ENCODE measurements at regions of chr5 and their contacts with region 1.

Region 1: GRCh38 chr5:89313804-89314588 is 431.0 kb upstream of the MEF2C start:
- DNase-seq: no peak
- ATAC-seq: peak; percentile 94
- H3K4me3 Mint-ChIP-seq: peak overlapping the region; percentile 66
- H3K27ac Mint-ChIP-seq: peak overlapping the region; percentile 96
- H3K4me1 Mint-ChIP-seq: peaks cover 48% of the 10 kb centered on the region
- H3K27me3 Mint-ChIP-seq: no peaks in the 10 kb centered on the region
- CTCF ChIP-seq: no peak

Region 2: GRCh38 chr5:88819301-88819999 is 494.5 kb before region 1 on chr5:
- CTCF ChIA-PET with region 1: no interaction called
- POLR2A ChIA-PET with region 1: interaction called, 14 read pairs
- intact Hi-C with region 1: no loop called
- DNase-seq: no peak
- ATAC-seq: peak; percentile 67
- H3K4me3 Mint-ChIP-seq: peak overlapping the region; percentile 80
- H3K27ac Mint-ChIP-seq: peak overlapping the region; percentile 91
- H3K4me1 Mint-ChIP-seq: peaks cover 87% of the 10 kb centered on the region
- H3K27me3 Mint-ChIP-seq: no peaks in the 10 kb centered on the region
- CTCF ChIP-seq: no peak

Region 3: GRCh38 chr5:89120719-89121118 is 193.3 kb before region 1 on chr5:
- CTCF ChIA-PET with region 1: no interaction called
- POLR2A ChIA-PET with region 1: no interaction called
- intact Hi-C with region 1: no loop called
- DNase-seq: no peak
- ATAC-seq: no peak
- H3K4me3 Mint-ChIP-seq: no peak overlapping the region
- H3K27ac Mint-ChIP-seq: no peak overlapping the region
- H3K4me1 Mint-ChIP-seq: peaks cover 8% of the 10 kb centered on the region
- H3K27me3 Mint-ChIP-seq: no peaks in the 10 kb centered on the region
- CTCF ChIP-seq: no peak

Region 4: DNA sequence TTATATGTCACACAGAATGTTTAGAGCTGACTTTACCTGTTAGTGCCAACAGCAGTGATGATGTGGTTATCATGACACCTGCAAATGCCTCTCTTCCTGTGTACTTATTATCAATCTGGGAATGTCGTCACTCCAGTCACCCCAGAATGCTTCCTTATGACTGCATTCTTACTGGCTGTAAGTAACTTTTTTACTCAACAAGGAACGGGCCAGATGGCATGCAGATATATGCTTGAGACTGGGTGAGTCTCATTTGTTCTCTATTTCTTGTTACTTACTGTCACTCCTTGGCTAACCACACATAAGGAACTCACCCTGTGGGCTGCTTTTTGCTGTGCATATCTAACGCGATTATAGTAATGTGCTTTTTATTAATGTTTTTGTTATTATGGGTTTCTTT is 45.5 kb before region 1 on chr5:
- CTCF ChIA-PET with region 1: interaction called, 9 read pairs
- POLR2A ChIA-PET with region 1: interaction called, 38 read pairs
- intact Hi-C with region 1: loop called (anchors 1 kb)
- DNase-seq: no peak
- ATAC-seq: peak; percentile 27
- H3K4me3 Mint-ChIP-seq: peak overlapping the region; percentile 50
- H3K27ac Mint-ChIP-seq: peak overlapping the region; percentile 92
- H3K4me1 Mint-ChIP-seq: peaks cover 78% of the 10 kb centered on the region
- H3K27me3 Mint-ChIP-seq: no peaks in the 10 kb centered on the region
- CTCF ChIP-seq: no peak

Region 5: GRCh38 chr5:89303033-89303480 is 10.9 kb before region 1 on chr5:
- CTCF ChIA-PET with region 1: interaction called, 14 read pairs
- POLR2A ChIA-PET with region 1: interaction called, 40 read pairs
- intact Hi-C with region 1: loop called (anchors 1 kb)
- DNase-seq: no peak
- ATAC-seq: peak; percentile 64
- H3K4me3 Mint-ChIP-seq: no peak overlapping the region
- H3K27ac Mint-ChIP-seq: peak overlapping the region; percentile 84
- H3K4me1 Mint-ChIP-seq: peaks cover 62% of the 10 kb centered on the region
- H3K27me3 Mint-ChIP-seq: no peaks in the 10 kb centered on the region
- CTCF ChIP-seq: no peak

Region 6: GRCh38 chr5:89343666-89344065 is 29.7 kb after region 1 on chr5:
- CTCF ChIA-PET with region 1: interaction called, 11 read pairs
- POLR2A ChIA-PET with region 1: interaction called, 50 read pairs
- intact Hi-C with region 1: loop called (anchors 1 kb)
- DNase-seq: peak; percentile 29
- ATAC-seq: peak; percentile 79
- H3K4me3 Mint-ChIP-seq: peak overlapping the region; percentile 42
- H3K27ac Mint-ChIP-seq: peak overlapping the region; percentile 80
- H3K4me1 Mint-ChIP-seq: peaks cover 49% of the 10 kb centered on the region
- H3K27me3 Mint-ChIP-seq: no peaks in the 10 kb centered on the region
- CTCF ChIP-seq: no peak

Region 7: DNA sequence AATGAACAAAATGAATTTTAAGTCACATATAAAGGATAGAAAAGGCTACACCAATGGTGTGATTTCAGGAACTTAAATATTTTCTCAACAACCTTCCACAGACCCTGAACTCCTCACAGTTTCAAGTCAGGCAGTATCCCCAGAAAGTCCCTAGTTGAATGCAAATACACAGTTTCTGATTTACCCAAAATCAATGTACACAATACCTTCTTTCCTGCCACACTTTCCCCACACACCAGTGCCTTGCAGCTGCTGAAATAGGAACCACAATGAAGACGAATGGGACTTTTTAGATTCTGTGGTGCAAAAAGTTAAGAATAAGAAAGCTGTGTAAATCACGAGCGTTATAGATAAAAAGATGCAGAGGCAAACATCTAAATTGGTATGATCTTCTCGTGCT is 121.4 kb after region 1 on chr5:
- CTCF ChIA-PET with region 1: interaction called, 7 read pairs
- POLR2A ChIA-PET with region 1: interaction called, 14 read pairs
- intact Hi-C with region 1: loop called (anchors 1 kb)
- DNase-seq: no peak
- ATAC-seq: peak; percentile 85
- H3K4me3 Mint-ChIP-seq: peak overlapping the region; percentile 52
- H3K27ac Mint-ChIP-seq: peak overlapping the region; percentile 86
- H3K4me1 Mint-ChIP-seq: peaks cover 73% of the 10 kb centered on the region
- H3K27me3 Mint-ChIP-seq: no peaks in the 10 kb centered on the region
- CTCF ChIP-seq: no peak

Measured in activated B cell treated with CpG ODN at 0.5 μM for 24 hours (primary cell).